ENCODE measurements at regions of chr2 and their contacts with region 1.

Region 1: DNA sequence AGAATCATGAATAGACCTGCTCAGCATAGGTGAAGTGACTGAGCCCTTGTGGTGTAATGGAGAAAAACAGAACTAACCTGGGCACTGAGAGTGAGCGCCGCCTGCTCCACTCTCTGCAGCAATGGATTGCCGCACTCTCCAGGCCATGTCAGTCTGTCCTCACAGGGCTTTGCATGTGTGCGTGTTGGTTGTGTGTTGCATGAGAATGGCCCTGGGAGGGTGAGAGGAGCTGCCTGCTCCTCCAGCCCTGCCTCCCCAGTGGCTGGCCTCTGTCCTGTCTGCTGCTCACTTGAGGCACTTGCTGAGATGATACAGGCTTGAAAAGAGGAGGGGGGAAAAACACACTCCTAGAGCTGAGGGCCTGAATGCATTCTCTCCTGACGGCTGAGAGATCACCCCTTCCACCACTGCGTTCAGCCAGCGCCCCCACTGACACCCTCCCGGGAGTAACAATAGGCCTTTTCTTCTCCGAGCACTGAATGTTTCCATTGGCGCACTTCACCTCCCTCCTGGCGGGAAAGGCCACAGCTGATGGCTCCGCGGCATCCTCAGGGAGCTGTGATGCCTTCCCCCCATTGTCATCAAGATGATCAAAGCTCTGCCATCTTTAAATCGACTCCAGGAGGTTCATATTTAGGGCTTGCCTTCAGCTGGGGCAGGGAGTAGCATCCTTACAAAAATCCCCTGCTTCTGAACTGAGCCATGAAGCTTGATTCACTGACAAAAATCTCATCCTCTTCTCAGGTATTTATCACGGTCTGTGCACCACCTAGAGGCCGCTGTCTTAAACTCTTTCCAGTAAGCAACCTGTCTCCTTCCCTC is 49.9 kb upstream of the DAPL1 start:
- DNase-seq: peak; percentile 35 to 72 (median 71)
- ATAC-seq: peak; percentile 51 to 76
- H3K4me3 ChIP-seq: no peak overlapping the region
- H3K27ac ChIP-seq: no peak overlapping the region
- H3K4me1 ChIP-seq: peaks cover 19% of the 10 kb centered on the region
- H3K27me3 ChIP-seq: no peaks in the 10 kb centered on the region

Region 2: GRCh38 chr2:158179660-158180059 is 565.6 kb before region 1 on chr2:
- intact Hi-C with region 1: loop called in 2 of 4 experiments (anchors 5 to 10 kb)
- DNase-seq: no peak
- ATAC-seq: peak; percentile 51 to 59
- H3K4me3 ChIP-seq: no peak overlapping the region
- H3K27ac ChIP-seq: no peak overlapping the region
- H3K4me1 ChIP-seq: no peaks in the 10 kb centered on the region
- H3K27me3 ChIP-seq: no peaks in the 10 kb centered on the region

Region 3: GRCh38 chr2:158189526-158189925 is 555.7 kb before region 1 on chr2:
- intact Hi-C with region 1: loop called in 3 of 4 experiments (anchors 5 to 10 kb)
- DNase-seq: no peak
- ATAC-seq: no peak
- H3K4me3 ChIP-seq: no peak overlapping the region
- H3K27ac ChIP-seq: no peak overlapping the region
- H3K4me1 ChIP-seq: no peaks in the 10 kb centered on the region
- H3K27me3 ChIP-seq: no peaks in the 10 kb centered on the region

Region 4: GRCh38 chr2:158456309-158457066 is 288.8 kb before region 1 on chr2 and contains the starts of genes CCDC148 and PKP4:
- intact Hi-C with region 1: loop called in 3 of 4 experiments (anchors 5 kb)
- DNase-seq: peak; percentile 91 to 96 (median 95)
- ATAC-seq: peak; percentile 97
- H3K4me3 ChIP-seq: peak within 1 kb of the TSS; percentile 51
- H3K27ac ChIP-seq: peak within 1 kb of the TSS; percentile 53
- H3K4me1 ChIP-seq: no peaks in the 10 kb centered on the region
- H3K27me3 ChIP-seq: no peaks in the 10 kb centered on the region
- total RNA-seq, gene CCDC148: 0.70 to 2.4 (median 1.7) TPM
- total RNA-seq, gene PKP4: 49.2 to 74.8 (median 62.7) TPM

Region 5: DNA sequence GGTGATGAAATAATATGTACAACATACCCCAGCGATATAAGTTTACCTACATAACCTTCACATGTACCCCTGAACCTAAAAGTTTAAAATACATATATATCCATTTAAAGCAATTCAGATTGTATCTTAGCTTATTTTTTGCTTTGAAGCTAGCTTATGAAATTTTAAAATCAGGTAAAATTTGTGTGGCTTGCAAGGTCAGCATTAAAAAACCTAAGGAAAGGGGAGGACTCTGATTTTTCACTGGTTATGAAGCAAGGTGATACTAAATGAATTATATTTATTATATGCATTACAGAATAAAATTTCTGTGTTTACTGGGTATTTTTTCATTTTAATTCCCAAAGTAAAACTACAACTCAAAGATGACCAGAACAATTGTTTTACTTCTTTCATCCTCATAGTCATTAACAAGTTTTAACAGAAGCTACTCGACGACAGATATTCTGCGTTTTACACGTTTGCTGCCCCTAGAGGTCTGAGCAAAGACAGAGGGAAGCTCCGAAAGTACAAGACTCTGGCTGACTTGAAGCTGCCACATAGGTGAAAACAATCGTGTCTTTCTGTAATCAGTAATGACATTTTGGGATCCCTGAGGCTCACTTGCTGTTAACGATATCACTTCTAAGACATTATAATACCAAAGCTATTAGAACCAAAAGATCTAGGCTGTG is 271.4 kb before region 1 on chr2:
- intact Hi-C with region 1: loop called in 1 of 4 experiments (anchors 10 kb)
- DNase-seq: no peak
- ATAC-seq: no peak
- H3K4me3 ChIP-seq: no peak overlapping the region
- H3K27ac ChIP-seq: no peak overlapping the region
- H3K4me1 ChIP-seq: peaks cover 5% of the 10 kb centered on the region
- H3K27me3 ChIP-seq: no peaks in the 10 kb centered on the region

Region 6: DNA sequence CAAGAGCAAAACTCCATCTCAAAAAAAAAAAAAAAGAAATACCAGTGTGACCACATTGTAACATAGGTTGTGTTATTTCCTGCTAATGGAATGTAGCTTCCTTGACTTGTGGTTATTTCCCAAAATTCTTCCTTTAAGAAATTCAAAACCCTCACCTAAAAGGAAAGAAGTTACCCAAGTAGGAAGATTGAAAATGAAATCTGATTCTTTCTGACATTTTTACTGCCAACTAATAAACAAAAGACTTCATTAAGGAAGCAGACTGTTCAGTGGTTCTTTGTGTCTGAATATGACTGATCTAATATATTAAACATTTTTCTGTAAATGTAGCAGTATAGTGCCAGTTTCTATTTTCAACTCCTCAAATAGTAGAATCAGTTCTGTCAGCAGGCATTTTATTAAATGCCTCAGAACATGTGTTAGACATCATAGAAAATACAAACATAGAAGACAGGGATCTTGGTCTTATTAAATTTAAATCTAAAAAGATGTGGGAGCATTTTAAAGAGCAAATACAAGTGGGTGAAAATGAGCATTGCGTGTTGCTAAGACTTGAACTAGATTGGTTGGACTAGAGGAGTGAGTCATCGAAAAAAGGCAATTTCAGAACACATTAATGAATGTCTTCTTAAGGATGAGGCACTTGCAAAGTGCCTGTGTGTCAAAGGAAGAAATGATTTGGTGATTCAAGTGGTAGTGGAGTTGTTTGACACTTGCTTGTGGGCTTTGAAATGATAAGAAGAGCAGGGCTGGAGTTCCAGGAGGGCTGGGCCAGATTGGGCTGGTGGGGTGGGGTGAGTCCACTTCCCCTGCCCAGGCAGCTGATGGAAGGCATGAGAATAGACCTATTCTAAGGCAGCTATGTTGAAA is 235.1 kb before region 1 on chr2:
- intact Hi-C with region 1: no loop called
- DNase-seq: peak in 1 of 3 donors; percentile 44
- ATAC-seq: peak; percentile 61
- H3K4me3 ChIP-seq: no peak overlapping the region
- H3K27ac ChIP-seq: no peak overlapping the region
- H3K4me1 ChIP-seq: peaks cover 11% of the 10 kb centered on the region
- H3K27me3 ChIP-seq: no peaks in the 10 kb centered on the region

Region 7: DNA sequence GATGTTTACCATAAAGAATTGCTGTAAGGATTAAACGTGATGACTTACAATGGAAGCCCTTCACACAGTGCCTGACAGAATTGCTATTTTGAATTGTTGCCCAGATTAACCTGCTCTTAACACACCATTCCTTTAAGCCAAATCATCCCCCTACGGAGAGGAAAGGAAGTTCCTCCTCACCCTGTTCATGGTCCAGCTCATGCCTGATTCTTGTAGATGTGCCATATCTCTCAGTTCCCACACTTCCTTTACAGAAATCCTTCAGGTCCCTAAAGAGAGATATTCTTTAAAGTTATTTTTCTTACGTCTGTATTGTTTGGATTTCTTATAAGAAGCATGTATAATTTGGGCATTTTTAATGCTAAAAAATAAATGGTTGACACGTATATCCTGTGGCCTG is 77.7 kb before region 1 on chr2:
- intact Hi-C with region 1: no loop called
- DNase-seq: no peak
- ATAC-seq: peak; percentile 56 to 86
- H3K4me3 ChIP-seq: no peak overlapping the region
- H3K27ac ChIP-seq: peak overlapping the region; percentile 61
- H3K4me1 ChIP-seq: peaks cover 19% of the 10 kb centered on the region
- H3K27me3 ChIP-seq: no peaks in the 10 kb centered on the region

Measured in right cardiac atrium (tissue), 5 donors.